HEK293T (cell line): ENCODE measurements at regions of chr13 and their contacts with region 1.

Region 1: GRCh38 chr13:69623973-69624372 is 483.7 kb upstream of the ATXN8OS start:
- DNase-seq: no peak

Region 2: DNA sequence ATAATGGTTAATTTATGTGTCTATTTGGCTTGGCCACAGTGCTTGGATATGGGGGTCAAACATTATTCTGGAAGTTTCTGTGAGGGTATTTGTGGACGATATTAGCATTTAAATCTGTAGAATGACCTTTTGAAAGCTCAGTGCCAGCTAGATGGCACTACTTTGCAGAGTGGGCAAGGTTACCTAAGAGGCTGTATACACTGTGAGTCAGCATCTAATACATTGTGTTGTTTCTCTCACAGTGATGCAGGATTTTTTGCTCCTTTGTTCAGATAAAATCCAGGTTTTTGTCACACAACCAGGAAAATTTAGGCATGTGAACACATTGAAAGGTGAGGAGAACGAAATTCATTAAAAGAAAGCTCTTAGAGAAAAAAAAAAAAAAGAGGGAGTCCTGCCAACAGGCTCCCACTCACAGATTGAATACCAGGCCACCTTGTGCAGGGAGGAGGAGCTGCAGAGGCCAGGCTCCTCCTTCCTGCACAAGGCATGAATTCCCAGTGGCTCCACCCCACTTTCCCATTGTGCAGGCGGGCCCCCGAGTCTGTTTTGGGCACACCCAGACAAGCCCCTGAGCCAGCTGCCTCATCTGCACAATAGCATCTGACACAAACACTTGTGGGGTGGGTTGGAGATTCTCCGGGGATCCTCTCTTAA is 67.3 kb before region 1 on chr13:
- CTCF ChIA-PET with region 1: interaction called, 12 read pairs
- POLR2A ChIA-PET with region 1: no interaction called
- DNase-seq: no peak